T-cell (primary cell): ENCODE measurements at regions of chr5 and their contacts with region 1.

Region 1: DNA sequence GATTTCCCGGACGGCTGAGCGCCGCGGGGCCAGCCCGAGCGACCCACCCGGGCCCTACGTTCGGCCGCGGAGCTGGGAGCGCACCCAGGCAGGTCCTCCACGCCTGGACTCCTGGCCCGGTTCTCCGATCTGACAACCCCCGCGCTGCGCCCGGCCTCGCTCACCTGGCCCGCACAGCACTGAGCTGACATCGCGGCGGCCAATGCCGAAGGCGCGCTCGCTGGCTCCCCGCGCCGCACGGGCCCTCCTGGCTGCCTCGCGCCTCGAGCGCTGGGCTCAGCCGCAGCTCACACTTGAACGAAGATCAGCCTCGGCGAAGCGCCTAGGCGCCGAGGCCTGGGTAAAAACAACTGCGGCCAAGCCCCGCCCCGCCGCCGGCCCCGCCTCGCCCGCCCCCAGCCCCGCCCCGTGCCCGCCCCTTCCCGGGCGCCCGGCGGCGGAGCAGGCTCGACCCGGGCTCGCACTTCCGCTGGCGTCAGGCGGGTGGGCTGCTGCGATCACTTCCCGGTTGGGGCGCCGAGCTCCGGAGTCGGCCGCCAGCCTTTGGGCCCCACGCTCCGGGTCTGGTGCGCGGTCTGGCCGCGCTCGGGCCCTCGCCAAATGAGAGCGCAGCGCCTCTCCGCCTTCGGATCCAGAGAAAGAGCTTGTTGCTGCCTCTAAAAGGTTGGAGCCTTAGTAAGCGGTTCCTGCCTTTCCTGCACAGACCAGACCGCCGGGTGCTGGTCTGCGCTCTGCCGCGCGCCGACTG is at the start of gene SERINC5:
- DNase-seq: peak; percentile 64 to 87 (median 79)
- ATAC-seq: peak; percentile 81 to 88 (median 83)
- H3K4me3 ChIP-seq: peak within 1 kb of the TSS; percentile 97 to 98
- H3K4me3 Mint-ChIP-seq: peak within 1 kb of the TSS; percentile 95 to 97 (median 97)
- H3K27ac ChIP-seq: peak within 1 kb of the TSS; percentile 89
- H3K27ac Mint-ChIP-seq: peak within 1 kb of the TSS; percentile 96 to 97
- H3K4me1 ChIP-seq: peaks cover 30 to 54% of the 10 kb centered on the region in 2 experiments
- H3K4me1 Mint-ChIP-seq: peaks cover 45 to 55% (median 54%) of the 10 kb centered on the region in 3 donors
- H3K27me3 ChIP-seq: no peaks in the 10 kb centered on the region
- H3K27me3 Mint-ChIP-seq: no peaks in the 10 kb centered on the region
- total RNA-seq, gene SERINC5: 109 to 170 (median 112) TPM

Region 2: DNA sequence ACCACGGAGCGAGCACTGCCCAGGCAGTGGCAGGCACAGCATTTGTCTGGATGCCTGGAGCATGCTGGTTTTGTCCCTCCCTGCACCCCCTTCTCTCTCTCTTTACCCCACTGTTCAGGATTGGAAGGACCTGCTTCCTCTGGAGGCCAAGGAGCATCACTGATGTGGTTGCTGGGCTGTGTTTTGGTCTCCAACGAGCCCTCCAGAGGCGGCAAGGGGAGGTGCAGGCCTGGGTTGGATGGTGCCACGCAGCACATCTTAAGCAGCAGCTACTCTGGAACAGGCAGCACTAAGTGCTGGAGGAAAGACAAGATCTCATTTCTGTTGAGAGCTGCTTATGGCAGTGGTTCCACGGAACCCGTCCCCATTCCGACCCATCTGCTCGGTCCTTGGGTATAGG is 426.6 kb before region 1 on chr5:
- CTCF ChIA-PET with region 1: no interaction called
- POLR2A ChIA-PET with region 1: no interaction called
- DNase-seq: no peak
- ATAC-seq: no peak
- H3K4me3 ChIP-seq: no peak overlapping the region
- H3K4me3 Mint-ChIP-seq: no peak overlapping the region
- H3K27ac ChIP-seq: no peak overlapping the region
- H3K27ac Mint-ChIP-seq: no peak overlapping the region
- H3K4me1 ChIP-seq: no peaks in the 10 kb centered on the region
- H3K4me1 Mint-ChIP-seq: peaks cover 0 to 13% (median 0%) of the 10 kb centered on the region in 3 donors
- H3K27me3 ChIP-seq: peaks cover 0 to 10% of the 10 kb centered on the region in 2 experiments
- H3K27me3 Mint-ChIP-seq: peaks cover 15% of the 10 kb centered on the region in 2 donors

Region 3: GRCh38 chr5:80116465-80116864 is 139.4 kb before region 1 on chr5:
- CTCF ChIA-PET with region 1: no interaction called
- POLR2A ChIA-PET with region 1: interaction called, 10 to 12 read pairs
- DNase-seq: no peak
- ATAC-seq: peak in 1 of 4 experiments; percentile 41
- H3K4me3 ChIP-seq: no peak overlapping the region
- H3K4me3 Mint-ChIP-seq: peak overlapping the region in 1 of 3 donors; percentile 41
- H3K27ac ChIP-seq: no peak overlapping the region
- H3K27ac Mint-ChIP-seq: peak overlapping the region; percentile 74 to 87
- H3K4me1 ChIP-seq: peaks cover 3 to 18% of the 10 kb centered on the region in 2 experiments
- H3K4me1 Mint-ChIP-seq: peaks cover 33 to 53% (median 48%) of the 10 kb centered on the region in 3 donors
- H3K27me3 ChIP-seq: no peaks in the 10 kb centered on the region
- H3K27me3 Mint-ChIP-seq: no peaks in the 10 kb centered on the region

Region 4: DNA sequence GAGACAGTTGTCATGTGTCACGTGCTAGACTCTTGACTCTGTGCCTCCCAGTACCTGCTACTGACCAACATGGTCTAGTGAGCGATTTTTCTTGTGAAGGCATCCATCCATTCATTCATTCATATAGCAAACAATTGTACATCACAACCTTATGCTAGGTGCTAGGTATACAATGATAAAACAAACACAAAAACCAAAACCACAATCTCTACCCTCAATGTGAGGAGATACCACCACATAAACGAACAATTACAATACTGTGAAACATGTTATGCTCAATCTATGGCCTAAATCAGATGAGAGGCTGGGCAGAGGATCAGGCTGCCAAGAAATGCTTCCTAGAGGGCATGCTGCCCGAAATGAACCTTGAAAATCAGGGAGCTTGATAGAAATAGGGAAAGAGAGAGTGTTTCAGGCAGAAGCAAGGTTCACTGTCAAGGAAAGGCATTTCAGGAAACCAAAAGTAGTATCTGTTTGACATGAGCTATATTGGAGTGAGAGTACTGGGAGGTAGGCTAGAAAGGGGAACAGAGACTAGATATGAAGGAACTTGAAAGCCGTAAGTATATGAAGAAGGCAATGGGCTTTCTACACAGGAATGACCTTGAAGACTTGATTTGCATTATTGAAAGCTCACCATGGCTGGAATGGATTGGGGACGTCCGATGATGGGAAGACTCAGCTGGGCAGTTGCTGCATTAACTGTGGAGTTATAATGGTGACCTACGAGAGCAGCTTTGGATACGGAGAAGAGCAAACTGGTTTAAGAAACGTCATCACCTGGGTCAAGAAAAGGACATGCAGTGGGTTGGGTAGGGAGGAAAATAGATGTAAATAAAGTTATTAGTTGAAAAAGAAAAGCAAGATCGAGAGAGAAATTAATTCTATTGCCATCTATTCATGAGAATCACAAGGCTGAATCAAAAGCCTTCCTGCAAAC is 130.6 kb before region 1 on chr5:
- CTCF ChIA-PET with region 1: no interaction called
- POLR2A ChIA-PET with region 1: interaction called, 11 to 12 read pairs
- DNase-seq: no peak
- ATAC-seq: no peak
- H3K4me3 ChIP-seq: no peak overlapping the region
- H3K4me3 Mint-ChIP-seq: peak overlapping the region; percentile 5 to 36 (median 34)
- H3K27ac ChIP-seq: no peak overlapping the region
- H3K27ac Mint-ChIP-seq: peak overlapping the region; percentile 45 to 80
- H3K4me1 ChIP-seq: peaks cover 19 to 22% of the 10 kb centered on the region in 2 experiments
- H3K4me1 Mint-ChIP-seq: peaks cover 56 to 61% (median 60%) of the 10 kb centered on the region in 3 donors
- H3K27me3 ChIP-seq: no peaks in the 10 kb centered on the region
- H3K27me3 Mint-ChIP-seq: no peaks in the 10 kb centered on the region